CD4-positive, alpha-beta T cell (primary cell): ENCODE measurements at regions of chr6 and their contacts with region 1.

Region 1: DNA sequence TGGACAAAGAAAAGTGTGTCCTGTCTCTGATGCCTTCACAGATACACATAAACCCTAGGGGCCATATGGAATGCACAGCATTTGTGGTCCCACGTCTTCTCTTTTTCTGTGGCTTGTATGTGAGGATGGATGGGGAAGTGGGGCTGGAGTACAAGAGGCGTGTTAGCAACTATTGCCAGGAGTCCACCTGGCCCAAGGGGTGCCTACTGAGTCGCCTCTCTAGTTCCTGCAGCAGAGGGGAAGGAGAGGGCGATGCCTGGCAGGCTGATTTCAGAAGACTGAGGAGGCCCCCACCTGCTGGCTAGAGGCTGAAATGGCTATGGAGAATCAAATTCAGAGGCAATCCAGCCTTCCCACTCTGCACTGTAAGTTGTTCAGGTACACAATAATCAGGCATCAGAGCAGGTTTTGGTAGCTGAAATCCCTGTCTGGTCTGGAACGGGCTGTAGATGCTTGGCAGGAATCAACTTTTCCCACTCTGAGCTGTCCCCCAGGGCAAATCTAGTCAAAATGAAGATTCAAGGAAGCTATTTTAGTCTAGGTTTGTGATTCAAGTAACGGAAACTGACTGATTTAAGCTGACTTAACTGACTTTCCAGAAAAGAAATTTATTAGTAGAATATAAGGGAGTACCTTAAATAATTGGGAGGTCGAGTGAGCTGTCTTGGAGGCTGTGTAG is 14.9 kb upstream of the PPARD start:
- DNase-seq: peak; percentile 65 to 87 (median 75)
- ATAC-seq: peak; percentile 77
- H3K4me3 ChIP-seq: no peak overlapping the region
- H3K4me3 Mint-ChIP-seq: peak overlapping the region; percentile 28
- H3K27ac ChIP-seq: peak overlapping the region in 1 of 2 donors; percentile 30
- H3K27ac Mint-ChIP-seq: peak overlapping the region; percentile 86
- H3K4me1 ChIP-seq: peaks cover 23% of the 10 kb centered on the region
- H3K4me1 Mint-ChIP-seq: peaks cover 26% of the 10 kb centered on the region
- H3K27me3 ChIP-seq: no peaks in the 10 kb centered on the region
- H3K27me3 Mint-ChIP-seq: no peaks in the 10 kb centered on the region
- CTCF ChIP-seq: peak; percentile 78

Region 2: DNA sequence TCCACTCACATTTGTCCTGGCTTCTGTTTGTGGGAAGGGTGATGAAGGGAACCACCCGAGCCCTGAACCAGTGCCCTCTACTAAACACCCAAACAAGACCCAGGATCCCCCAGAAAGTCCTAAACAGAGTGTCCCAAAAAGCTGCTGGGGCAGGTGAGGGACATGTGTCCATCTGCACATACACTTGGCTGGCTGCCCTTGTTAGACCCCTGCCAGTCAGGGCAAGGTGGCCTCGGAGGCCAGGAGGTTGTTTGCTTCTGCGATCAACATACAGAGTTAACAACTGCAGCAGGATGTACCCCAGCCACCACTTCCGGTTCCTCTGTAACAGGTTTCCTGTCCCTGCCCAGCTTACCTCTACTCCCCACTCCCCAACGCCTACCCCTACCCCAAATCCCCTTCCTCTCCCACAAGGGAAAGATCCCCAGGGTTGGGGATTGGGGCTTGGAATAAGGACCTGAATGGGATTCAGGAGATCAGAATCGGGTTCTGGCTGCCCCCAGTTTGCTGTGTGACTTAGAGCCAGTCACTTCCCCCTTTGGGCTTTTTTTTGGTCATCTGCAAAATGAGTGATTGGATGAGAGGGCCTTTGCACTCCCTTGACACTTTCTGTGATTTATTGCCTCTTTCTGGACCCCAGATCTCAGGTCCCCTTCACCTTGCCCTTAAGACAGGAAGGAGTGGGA is 16.0 kb before region 1 on chr6:
- CTCF ChIA-PET with region 1: interaction called, 3 read pairs
- POLR2A ChIA-PET with region 1: interaction called, 8 read pairs
- intact Hi-C with region 1: loop called in 1 of 2 experiments (anchors 2 kb)
- DNase-seq: peak; percentile 35 to 81 (median 64)
- ATAC-seq: peak; percentile 84
- H3K4me3 ChIP-seq: peak overlapping the region; percentile 46
- H3K4me3 Mint-ChIP-seq: peak overlapping the region; percentile 84
- H3K27ac ChIP-seq: peak overlapping the region; percentile 95
- H3K27ac Mint-ChIP-seq: peak overlapping the region; percentile 99
- H3K4me1 ChIP-seq: peaks cover 67% of the 10 kb centered on the region
- H3K4me1 Mint-ChIP-seq: peaks cover 97% of the 10 kb centered on the region
- H3K27me3 ChIP-seq: no peaks in the 10 kb centered on the region
- H3K27me3 Mint-ChIP-seq: no peaks in the 10 kb centered on the region
- CTCF ChIP-seq: no peak

Region 3: DNA sequence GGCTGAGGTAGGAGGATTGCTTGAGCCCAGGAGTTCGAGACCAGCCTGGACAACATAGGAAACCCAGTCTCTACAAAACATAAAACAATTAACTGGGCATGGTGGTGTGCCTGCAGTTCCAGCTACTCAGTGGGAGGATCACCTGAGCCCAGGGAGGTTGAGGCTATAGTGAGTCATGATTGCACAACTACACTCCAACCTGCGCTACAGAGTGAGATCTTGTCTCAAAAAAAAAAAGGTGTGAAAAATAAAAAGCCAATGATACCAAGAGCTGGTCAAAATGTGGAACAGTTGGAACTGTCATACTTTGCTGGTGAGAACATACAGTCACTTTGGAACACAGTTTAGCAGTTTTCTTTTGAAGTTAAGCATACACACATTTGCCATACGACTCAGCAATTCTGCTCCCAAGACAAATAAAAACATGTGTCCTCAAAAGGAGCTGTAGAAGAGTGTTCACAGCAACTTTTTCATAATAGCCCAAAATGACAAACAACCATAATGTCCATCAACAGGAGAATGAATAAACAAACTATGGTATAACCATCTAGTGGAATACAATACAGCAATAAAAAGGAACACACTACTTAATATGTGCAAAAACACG is 382.9 kb after region 1 on chr6:
- CTCF ChIA-PET with region 1: no interaction called
- POLR2A ChIA-PET with region 1: no interaction called
- intact Hi-C with region 1: no loop called
- DNase-seq: peak in 4 of 14 experiments; percentile 34 to 62 (median 46)
- ATAC-seq: peak; percentile 58
- H3K4me3 ChIP-seq: no peak overlapping the region
- H3K4me3 Mint-ChIP-seq: no peak overlapping the region
- H3K27ac ChIP-seq: no peak overlapping the region
- H3K27ac Mint-ChIP-seq: no peak overlapping the region
- H3K4me1 ChIP-seq: peaks cover 23% of the 10 kb centered on the region
- H3K4me1 Mint-ChIP-seq: peaks cover 25% of the 10 kb centered on the region
- H3K27me3 ChIP-seq: no peaks in the 10 kb centered on the region
- H3K27me3 Mint-ChIP-seq: no peaks in the 10 kb centered on the region
- CTCF ChIP-seq: no peak